CD8-positive, alpha-beta T cell (primary cell): ENCODE measurements at regions of chr11 and their contacts with region 1.

Region 1: GRCh38 chr11:765025-765801 is 12.1 kb downstream of the GATD1 start:
- DNase-seq: peak; percentile 41 to 80 (median 70)
- ATAC-seq: peak; percentile 94
- H3K4me3 ChIP-seq: no peak overlapping the region
- H3K4me3 Mint-ChIP-seq: no peak overlapping the region
- H3K27ac ChIP-seq: no peak overlapping the region
- H3K27ac Mint-ChIP-seq: no peak overlapping the region
- H3K4me1 ChIP-seq: no peaks in the 10 kb centered on the region
- H3K4me1 Mint-ChIP-seq: no peaks in the 10 kb centered on the region
- H3K27me3 ChIP-seq: no peaks in the 10 kb centered on the region
- H3K27me3 Mint-ChIP-seq: no peaks in the 10 kb centered on the region
- CTCF ChIP-seq: peak; percentile 63

Region 2: GRCh38 chr11:662689-663274 is 102.4 kb before region 1 on chr11:
- CTCF ChIA-PET with region 1: no interaction called
- POLR2A ChIA-PET with region 1: no interaction called
- intact Hi-C with region 1: loop called in 1 of 2 experiments (anchors 2 kb)
- DNase-seq: peak in 6 of 9 experiments; percentile 27 to 60 (median 48)
- ATAC-seq: peak; percentile 77
- H3K4me3 ChIP-seq: no peak overlapping the region
- H3K4me3 Mint-ChIP-seq: no peak overlapping the region
- H3K27ac ChIP-seq: no peak overlapping the region
- H3K27ac Mint-ChIP-seq: no peak overlapping the region
- H3K4me1 ChIP-seq: no peaks in the 10 kb centered on the region
- H3K4me1 Mint-ChIP-seq: no peaks in the 10 kb centered on the region
- H3K27me3 ChIP-seq: no peaks in the 10 kb centered on the region
- H3K27me3 Mint-ChIP-seq: no peaks in the 10 kb centered on the region
- CTCF ChIP-seq: peak; percentile 69